ENCODE measurements at regions of chr3 and their contacts with region 1.

Region 1: DNA sequence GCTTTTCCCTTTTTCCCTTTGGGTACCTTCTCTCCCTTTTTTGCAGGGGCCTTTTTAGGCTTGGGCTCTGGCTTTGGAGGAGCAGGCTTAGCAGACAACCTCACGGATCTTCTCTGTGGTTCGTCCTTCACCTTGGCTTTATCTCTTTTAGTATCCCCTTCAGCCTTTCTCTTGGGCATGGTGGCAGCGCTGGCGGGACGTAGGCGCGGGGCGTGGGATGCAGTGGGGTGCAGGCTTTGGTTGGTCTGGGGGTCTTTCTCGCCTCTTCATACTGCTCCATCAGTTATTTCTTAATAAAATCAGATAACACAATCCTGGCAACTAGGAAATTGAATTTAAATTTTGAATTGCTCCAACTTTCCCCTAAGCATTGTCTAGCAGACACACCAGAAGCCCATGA is 11.3 kb upstream of the ATP1B3 start:
- DNase-seq: no peak
- H3K4me3 Mint-ChIP-seq: no peak overlapping the region
- H3K27ac Mint-ChIP-seq: no peak overlapping the region
- H3K4me1 Mint-ChIP-seq: peaks cover 11% of the 10 kb centered on the region
- H3K27me3 Mint-ChIP-seq: no peaks in the 10 kb centered on the region
- CTCF ChIP-seq: no peak

Region 2: DNA sequence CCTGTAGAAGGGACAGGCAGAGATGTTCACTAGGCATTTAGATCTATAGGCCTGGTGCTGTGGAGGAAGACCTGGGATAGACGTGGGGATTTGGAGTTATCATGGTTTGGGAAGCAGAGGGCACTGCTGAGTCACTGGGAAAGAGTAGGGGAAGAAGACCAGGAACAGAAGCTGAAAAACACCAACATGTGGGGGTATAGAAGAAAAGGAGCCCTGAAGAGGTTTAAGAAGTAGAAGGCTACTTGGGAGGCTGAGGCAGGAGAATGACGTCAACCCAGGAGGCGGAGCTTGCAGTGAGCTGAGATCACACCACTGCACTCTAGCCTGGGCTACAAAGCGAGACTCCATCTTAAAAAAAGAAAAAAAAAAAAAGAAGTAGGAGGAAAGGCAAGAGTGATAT is 82.6 kb before region 1 on chr3:
- CTCF ChIA-PET with region 1: interaction called, 11 read pairs
- intact Hi-C with region 1: no loop called
- DNase-seq: no peak
- H3K4me3 Mint-ChIP-seq: no peak overlapping the region
- H3K27ac Mint-ChIP-seq: no peak overlapping the region
- H3K4me1 Mint-ChIP-seq: no peaks in the 10 kb centered on the region
- H3K27me3 Mint-ChIP-seq: peaks cover 27% of the 10 kb centered on the region
- CTCF ChIP-seq: no peak

Region 3: DNA sequence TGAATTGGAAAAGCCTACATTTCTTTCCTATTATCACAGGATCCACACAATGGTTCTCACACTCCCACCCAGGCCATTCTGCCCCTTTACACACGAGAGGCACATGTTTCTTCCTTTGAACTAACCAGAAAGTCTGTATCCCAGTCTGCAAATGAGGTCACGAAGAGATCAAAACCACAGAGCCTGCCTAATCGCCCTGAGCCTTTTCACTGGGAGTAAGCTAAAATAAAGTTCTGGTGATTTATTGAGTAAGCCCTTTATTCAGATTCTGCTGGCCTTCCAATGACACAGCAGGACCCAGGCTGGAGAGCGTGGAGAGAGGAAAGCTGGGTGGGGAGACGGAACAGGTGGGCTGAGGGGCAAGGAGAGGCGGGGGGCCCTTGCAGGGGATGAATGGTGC is 90.1 kb after region 1 on chr3:
- CTCF ChIA-PET with region 1: no interaction called
- intact Hi-C with region 1: no loop called
- DNase-seq: no peak
- H3K4me3 Mint-ChIP-seq: no peak overlapping the region
- H3K27ac Mint-ChIP-seq: no peak overlapping the region
- H3K4me1 Mint-ChIP-seq: no peaks in the 10 kb centered on the region
- H3K27me3 Mint-ChIP-seq: no peaks in the 10 kb centered on the region
- CTCF ChIP-seq: no peak

Region 4: DNA sequence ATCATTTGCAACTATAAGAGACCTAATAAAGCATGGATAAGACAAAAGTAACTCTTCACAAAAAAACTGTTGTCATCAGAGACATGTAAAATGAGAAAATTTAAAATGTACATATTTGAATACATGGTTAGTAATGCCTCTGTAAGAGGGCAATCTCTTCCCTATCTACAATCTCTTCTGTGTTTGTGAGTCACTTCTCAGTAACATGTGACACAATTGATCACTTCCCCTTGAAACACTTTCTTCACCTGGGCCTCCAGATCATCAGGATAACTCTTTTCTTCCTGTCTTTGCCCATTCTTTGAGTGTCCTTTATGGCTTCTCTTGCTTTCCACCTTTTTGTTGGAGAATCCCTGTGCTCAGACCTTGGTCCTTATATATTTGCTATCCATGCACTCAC is 233.9 kb after region 1 on chr3:
- CTCF ChIA-PET with region 1: no interaction called
- intact Hi-C with region 1: no loop called
- DNase-seq: no peak
- H3K4me3 Mint-ChIP-seq: no peak overlapping the region
- H3K27ac Mint-ChIP-seq: no peak overlapping the region
- H3K4me1 Mint-ChIP-seq: peaks cover 13% of the 10 kb centered on the region
- H3K27me3 Mint-ChIP-seq: no peaks in the 10 kb centered on the region
- CTCF ChIP-seq: no peak

Measured in Calu3 (cell line).